Psoas muscle (tissue), 8 donors: ENCODE measurements at regions of chr2 and their contacts with region 1.

Region 1: DNA sequence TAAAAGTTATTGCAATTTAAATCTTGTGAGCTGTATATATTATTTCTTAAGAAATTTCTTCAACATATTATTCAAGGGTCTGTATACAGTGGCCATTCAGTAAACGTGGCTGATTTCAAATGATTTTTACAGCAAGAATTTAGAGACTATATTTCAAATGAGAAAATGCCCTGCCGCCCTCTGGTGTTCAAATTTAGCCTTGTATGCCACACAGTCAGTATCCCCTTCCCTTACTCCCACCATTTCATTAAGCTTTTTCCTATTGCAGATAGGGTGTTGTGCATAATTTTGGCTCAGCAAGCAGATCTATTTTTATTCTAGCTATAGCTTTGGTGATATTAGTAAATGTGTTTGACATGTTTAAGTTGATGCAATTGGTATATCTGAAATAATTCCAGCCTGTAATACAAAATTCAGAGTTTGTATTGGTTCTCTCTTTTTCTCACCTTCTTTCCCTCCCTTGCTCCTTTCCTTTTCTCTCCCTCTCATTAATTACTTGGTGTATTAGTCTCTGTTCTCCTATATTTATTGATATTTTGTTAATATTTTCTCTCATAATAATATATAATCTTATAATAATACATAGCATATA is 22.8 kb upstream of the SCN7A start:
- DNase-seq: no peak
- ATAC-seq: no peak
- H3K4me3 ChIP-seq: no peak overlapping the region
- H3K27ac ChIP-seq: no peak overlapping the region
- H3K4me1 ChIP-seq: no peaks in the 10 kb centered on the region
- H3K27me3 ChIP-seq: no peaks in the 10 kb centered on the region
- CTCF ChIP-seq: peak; percentile 40

Region 2: DNA sequence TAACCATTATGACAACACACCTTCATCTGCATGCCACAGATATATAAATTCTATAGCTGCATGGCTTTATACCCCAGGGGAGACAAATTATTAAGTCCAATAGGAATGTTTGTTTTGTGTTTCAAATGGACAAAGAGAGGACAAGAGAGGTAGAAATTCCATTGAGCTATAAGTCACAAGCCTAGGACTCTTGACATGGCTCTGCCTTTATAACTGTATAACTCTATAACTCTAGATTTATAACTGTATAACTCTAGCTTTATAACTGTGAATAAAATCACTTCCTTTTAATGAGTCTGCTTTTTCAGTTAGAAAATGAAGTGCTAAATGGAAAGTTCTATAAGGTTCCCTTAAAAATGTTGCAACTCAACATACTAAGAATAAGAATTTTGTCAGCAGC is 247.5 kb before region 1 on chr2:
- intact Hi-C with region 1: no loop called
- DNase-seq: no peak
- ATAC-seq: no peak
- H3K4me3 ChIP-seq: no peak overlapping the region
- H3K27ac ChIP-seq: no peak overlapping the region
- H3K4me1 ChIP-seq: no peaks in the 10 kb centered on the region
- H3K27me3 ChIP-seq: no peaks in the 10 kb centered on the region
- CTCF ChIP-seq: no peak

Region 3: DNA sequence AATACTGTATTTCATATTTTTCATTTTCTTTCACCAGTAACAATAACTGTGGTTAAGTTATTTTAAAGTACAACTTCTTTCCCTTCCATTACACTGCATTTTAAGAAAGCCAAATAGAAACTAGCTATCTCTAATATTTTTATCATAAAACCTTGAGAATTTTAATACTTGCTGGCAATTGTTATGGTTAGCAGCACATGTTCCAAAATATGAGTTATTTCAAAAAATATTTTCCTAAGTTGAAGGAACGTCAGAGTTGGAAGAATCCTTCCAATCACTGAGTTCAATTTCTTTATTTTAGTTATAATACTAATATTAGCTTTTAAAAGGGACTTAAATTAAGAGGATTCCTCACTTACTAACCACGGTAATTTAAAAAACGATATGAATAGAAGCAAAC is 209.5 kb before region 1 on chr2:
- intact Hi-C with region 1: no loop called
- DNase-seq: no peak
- ATAC-seq: no peak
- H3K4me3 ChIP-seq: no peak overlapping the region
- H3K27ac ChIP-seq: no peak overlapping the region
- H3K4me1 ChIP-seq: no peaks in the 10 kb centered on the region
- H3K27me3 ChIP-seq: no peaks in the 10 kb centered on the region
- CTCF ChIP-seq: no peak

Region 4: GRCh38 chr2:166361351-166362153 is 155.3 kb before region 1 on chr2:
- intact Hi-C with region 1: loop called in 1 of 2 experiments (anchors 5 kb)
- DNase-seq: no peak
- ATAC-seq: no peak
- H3K4me3 ChIP-seq: no peak overlapping the region
- H3K27ac ChIP-seq: no peak overlapping the region
- H3K4me1 ChIP-seq: no peaks in the 10 kb centered on the region
- H3K27me3 ChIP-seq: no peaks in the 10 kb centered on the region
- CTCF ChIP-seq: peak; percentile 37

Region 5: DNA sequence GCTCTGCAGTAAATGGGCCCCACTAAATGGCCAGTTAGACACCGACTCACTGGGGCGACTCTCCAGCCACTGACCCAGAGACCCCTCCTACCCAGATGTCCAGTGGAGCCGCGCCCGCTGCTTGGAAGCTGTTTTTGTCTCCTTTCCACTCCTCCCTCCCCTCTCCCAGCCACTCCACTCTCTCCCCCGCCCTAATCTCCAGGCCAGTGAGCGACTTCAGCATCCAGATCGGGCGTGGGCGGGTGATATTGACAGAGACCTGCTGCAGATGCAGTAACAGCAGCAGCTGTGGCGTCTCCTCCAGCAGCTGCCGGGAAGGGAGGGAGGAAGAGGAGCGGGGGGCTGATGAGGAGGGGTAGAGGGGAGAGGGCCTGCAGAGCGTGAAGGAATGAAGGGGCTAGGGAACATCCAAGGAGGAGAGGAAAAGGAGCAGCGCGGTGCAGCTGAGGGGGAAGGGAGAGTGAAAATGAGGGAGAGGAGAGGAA is 22.6 kb before region 1 on chr2 and contains the start of gene SCN7A:
- intact Hi-C with region 1: no loop called
- DNase-seq: peak; percentile 66 to 83
- ATAC-seq: peak in 3 of 4 donors; percentile 38 to 72 (median 69)
- H3K4me3 ChIP-seq: peak within 1 kb of the TSS; percentile 40
- H3K27ac ChIP-seq: no peak within 1 kb of the TSS
- H3K4me1 ChIP-seq: no peaks in the 10 kb centered on the region
- H3K27me3 ChIP-seq: peaks cover 0 to 3% (median 3%) of the 10 kb centered on the region in 3 donors
- CTCF ChIP-seq: no peak
- total RNA-seq, gene SCN7A: 2.5 to 17.3 (median 4.4) TPM

Region 6: DNA sequence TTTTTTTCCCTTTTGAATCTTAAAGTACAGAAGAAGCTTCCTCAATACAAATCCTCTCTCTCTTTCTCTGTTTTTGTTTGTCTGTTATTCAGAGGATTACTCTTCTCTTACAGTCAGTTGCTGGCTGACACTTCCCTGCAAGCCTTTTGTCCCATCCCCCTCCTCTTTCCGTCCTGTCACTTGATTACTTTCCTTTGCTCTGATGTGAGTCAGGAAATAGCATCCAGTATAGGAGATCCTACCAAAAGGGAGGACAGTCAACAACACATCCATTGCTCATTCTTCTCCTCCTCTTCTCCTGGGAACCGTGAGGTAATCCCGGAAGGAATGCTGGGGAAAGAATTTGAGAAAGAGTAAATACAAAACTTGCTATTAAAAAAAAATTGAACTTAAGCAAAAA is 56.6 kb after region 1 on chr2:
- intact Hi-C with region 1: no loop called
- DNase-seq: no peak
- ATAC-seq: no peak
- H3K4me3 ChIP-seq: no peak overlapping the region
- H3K27ac ChIP-seq: no peak overlapping the region
- H3K4me1 ChIP-seq: no peaks in the 10 kb centered on the region
- H3K27me3 ChIP-seq: no peaks in the 10 kb centered on the region
- CTCF ChIP-seq: no peak